Sciatic nerve (tissue), 2 donors: ENCODE measurements at regions of chr19 and their contacts with region 1.

Region 1: DNA sequence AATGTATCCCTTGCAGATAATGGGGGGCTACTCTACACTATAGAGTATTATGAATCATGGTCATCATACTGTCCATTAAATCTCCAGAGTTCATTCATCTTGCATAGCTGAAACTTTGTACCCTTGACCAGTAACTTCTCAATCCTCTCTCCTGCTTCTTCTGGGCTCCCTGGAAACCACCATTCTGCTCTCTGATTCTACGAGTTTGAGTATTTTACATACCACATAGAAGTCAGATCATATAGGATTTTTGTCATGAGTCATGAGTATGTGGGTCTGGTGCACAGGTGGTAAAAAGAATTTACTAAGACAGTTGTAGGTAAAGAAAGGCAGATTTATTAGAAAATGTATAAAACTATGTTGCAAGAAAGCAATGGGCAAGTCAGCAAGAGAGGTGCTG is 41.9 kb downstream of the WTIP start:
- DNase-seq: no peak
- ATAC-seq: no peak

Region 2: GRCh38 chr19:34597997-34598856 is 74.8 kb after region 1 on chr19:
- intact Hi-C with region 1: loop called (anchors 2 kb)
- DNase-seq: no peak
- ATAC-seq: no peak

Region 3: DNA sequence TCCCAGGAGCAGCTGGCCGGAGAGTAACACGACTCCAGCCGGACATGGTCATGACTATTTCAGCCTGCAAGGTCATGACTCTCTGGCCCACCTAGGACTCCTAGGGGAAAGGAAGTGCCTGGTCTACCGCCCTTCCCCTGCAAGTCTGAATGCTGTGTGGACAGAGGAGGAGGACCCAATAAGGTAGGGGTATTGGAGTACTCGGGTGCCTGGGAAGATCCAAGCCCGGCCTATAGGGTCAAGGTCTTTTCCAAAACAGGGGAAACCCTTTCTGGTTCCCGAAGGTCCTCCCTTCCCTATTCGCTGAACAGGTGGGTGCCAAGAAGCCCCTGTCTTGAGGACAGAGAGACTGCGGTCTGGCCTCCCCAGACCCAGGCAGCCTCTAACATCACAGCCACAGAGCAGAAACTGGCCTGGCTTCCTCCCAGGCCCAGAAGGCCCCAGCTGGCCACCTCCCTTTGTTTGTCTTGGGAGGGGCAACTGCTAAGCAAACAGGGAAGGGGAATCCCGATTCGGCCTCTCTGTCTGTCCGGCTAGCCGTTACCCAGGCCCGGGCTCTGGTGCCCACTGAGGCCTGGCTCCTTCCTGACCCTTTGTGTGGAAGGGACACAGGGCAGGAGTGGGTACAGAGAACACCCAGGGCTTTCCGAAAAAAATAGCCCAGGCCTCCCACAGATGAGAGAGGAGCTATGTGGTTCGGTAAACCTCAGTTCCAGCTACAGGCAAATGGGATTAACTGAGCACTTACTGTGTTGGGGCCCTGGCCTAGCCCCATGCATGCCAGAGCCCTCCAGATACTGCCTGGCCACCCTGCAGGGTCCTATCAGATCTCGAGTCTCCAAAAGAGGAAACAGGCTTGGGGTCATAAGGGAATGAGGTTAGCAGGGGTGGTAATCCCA is 471.5 kb after region 1 on chr19:
- intact Hi-C with region 1: no loop called
- DNase-seq: no peak
- ATAC-seq: peak; percentile 38